A673 (cell line): ENCODE measurements at regions of chr14 and their contacts with region 1.

Region 1: DNA sequence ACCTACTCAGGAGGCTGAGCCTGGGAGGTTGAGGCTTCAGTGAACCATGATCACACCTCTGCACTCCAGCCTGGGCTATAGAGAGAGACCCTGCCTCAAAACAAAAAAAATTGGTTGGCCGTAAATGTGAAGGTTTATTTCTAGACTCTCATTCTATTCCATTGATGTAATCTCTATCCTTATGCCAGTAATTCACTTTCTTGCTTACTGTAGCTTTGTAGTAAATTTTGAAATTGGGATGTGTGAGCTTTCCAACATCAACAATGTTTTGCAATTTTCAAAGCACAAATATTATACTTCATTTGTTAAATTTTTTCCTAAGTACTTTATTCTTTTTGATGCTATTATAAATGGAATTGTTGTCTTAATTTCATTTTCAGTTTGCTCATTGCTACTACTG is 24.6 kb downstream of the LIN52 start:
- DNase-seq: no peak
- H3K4me3 ChIP-seq: no peak overlapping the region
- H3K27ac ChIP-seq: no peak overlapping the region
- H3K4me1 ChIP-seq: no peaks in the 10 kb centered on the region
- H3K27me3 ChIP-seq: no peaks in the 10 kb centered on the region
- CTCF ChIP-seq: no peak

Region 2: DNA sequence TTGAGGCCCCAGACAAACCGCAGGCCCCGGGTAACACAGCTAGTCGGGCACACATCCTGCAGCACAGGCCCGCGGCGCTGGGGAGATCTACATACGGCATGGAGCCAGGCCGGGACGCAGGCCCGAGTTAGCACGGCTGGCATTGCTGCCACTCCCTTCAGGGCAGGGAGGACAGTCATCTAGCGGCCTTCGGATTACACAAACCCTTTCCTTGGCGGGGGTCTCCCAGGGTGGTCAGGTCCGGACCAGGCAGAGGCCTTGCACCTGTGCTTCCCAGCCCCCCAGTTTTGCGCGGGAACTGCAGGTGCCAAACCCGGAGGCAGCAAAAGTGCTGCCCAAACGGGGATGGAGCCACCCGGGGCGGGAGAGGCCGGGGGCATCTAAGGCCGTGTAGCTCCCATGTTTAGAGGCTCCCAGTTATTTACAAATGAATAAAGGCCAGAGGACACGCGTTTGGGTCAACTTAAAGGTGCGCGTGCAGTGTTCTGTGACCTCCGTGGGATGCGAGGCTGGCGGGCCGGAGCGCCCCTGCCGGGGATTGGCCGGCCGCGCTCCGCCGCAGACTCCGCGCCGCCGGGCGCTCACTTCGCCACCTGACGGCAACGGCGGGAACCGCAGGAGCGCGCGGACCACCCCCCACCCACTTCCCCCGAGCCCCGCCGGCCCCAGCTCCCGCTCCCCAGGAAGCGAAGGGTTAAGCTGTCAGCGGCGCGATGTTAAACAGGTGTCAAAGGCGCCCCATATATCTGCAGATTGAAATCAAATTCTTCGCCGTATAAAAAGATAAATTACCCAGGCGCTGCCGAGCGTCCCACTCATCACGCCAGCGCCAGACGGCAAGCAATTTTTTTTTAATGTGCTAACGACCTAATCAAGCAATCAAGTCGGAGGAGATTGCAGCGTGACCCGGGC is 148.0 kb after region 1 on chr14:
- CTCF ChIA-PET with region 1: interaction called, 4 read pairs
- POLR2A ChIA-PET with region 1: no interaction called
- intact Hi-C with region 1: loop called (anchors 1 kb)
- DNase-seq: peak; percentile 54
- H3K4me3 ChIP-seq: peak overlapping the region; percentile 57
- H3K27ac ChIP-seq: no peak overlapping the region
- H3K4me1 ChIP-seq: no peaks in the 10 kb centered on the region
- H3K27me3 ChIP-seq: no peaks in the 10 kb centered on the region
- CTCF ChIP-seq: peak; percentile 66

Region 3: GRCh38 chr14:74531467-74531866 is 422.1 kb after region 1 on chr14:
- CTCF ChIA-PET with region 1: no interaction called
- POLR2A ChIA-PET with region 1: no interaction called
- intact Hi-C with region 1: no loop called
- DNase-seq: no peak
- H3K4me3 ChIP-seq: no peak overlapping the region
- H3K27ac ChIP-seq: no peak overlapping the region
- H3K4me1 ChIP-seq: no peaks in the 10 kb centered on the region
- H3K27me3 ChIP-seq: no peaks in the 10 kb centered on the region
- CTCF ChIP-seq: no peak